K562 (cell line): ENCODE measurements at regions of chr17 and their contacts with region 1.

Region 1: GRCh38 chr17:48215583-48216139 is 108.1 kb downstream of the SNX11 start:
- DNase-seq: peak; percentile 58 to 71 (median 65)
- ATAC-seq: peak; percentile 90
- H3K4me3 ChIP-seq: no peak overlapping the region
- H3K27ac ChIP-seq: no peak overlapping the region
- H3K4me1 ChIP-seq: peaks cover 5 to 21% of the 10 kb centered on the region in 2 experiments
- H3K27me3 ChIP-seq: no peaks in the 10 kb centered on the region
- CTCF ChIP-seq: peak; percentile 76 to 89 (median 82)
- EP300 ChIP-seq: no peak
- POLR2A ChIP-seq: no peak
- RAD21 ChIP-seq: peak; percentile 89 to 94

Region 2: GRCh38 chr17:48153691-48154358 is 61.8 kb before region 1 on chr17:
- CTCF ChIA-PET with region 1: no interaction called
- POLR2A ChIA-PET with region 1: no interaction called
- in situ Hi-C with region 1: no loop called
- intact Hi-C with region 1: loop called (anchors 5 kb)
- DNase-seq: peak; percentile 62 to 70 (median 68)
- ATAC-seq: peak; percentile 79
- H3K4me3 ChIP-seq: no peak overlapping the region
- H3K27ac ChIP-seq: no peak overlapping the region
- H3K4me1 ChIP-seq: peaks cover 4 to 10% of the 10 kb centered on the region in 2 experiments
- H3K27me3 ChIP-seq: peaks cover 4% of the 10 kb centered on the region in 2 experiments; a peak in 2 of 5 replicates
- CTCF ChIP-seq: peak; percentile 58 to 76 (median 68); a peak in 5 of 6 replicates
- EP300 ChIP-seq: no peak
- POLR2A ChIP-seq: no peak
- RAD21 ChIP-seq: peak; percentile 45 to 54

Region 3: DNA sequence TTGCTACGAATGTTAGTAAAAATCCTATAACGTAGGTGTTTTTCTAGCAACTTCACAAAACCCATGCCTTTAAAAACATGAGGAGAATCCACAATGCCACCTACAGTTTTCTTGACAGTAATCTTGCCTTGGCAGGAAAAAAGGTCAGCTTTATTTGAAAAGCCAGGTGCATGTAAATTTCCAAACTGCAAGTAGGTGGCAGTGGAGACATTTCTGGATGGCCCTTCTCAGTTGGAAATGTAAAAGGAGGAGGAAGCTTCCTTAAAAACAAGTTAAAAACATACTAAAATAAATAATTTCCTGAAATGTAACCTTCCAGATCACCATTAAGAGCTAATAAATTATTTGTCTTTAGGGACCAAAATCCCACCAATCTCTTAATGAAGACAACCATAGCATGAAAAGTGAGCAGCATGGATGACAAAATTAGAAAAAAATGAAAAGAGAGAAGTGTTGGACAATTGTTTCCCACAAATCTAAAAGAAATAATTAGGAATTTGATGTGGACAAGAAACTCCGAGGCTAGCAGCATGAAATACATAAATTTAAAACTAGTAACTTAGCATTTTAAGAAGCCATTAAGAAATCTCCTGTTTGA is 44.1 kb after region 1 on chr17:
- CTCF ChIA-PET with region 1: interaction called, 7 read pairs
- POLR2A ChIA-PET with region 1: interaction called, 3 read pairs
- in situ Hi-C with region 1: no loop called
- intact Hi-C with region 1: loop called (anchors 2 kb)
- DNase-seq: peak; percentile 21 to 75 (median 34)
- ATAC-seq: peak; percentile 43; the same call in 2 of the 3 replicates
- H3K4me3 ChIP-seq: no peak overlapping the region
- H3K27ac ChIP-seq: no peak overlapping the region
- H3K4me1 ChIP-seq: peaks cover 0 to 12% of the 10 kb centered on the region in 2 experiments; a peak in 3 of 5 replicates
- H3K27me3 ChIP-seq: no peaks in the 10 kb centered on the region
- CTCF ChIP-seq: peak; percentile 73 to 91 (median 77)
- EP300 ChIP-seq: no peak
- POLR2A ChIP-seq: no peak
- RAD21 ChIP-seq: peak; percentile 68 to 76

Region 4: DNA sequence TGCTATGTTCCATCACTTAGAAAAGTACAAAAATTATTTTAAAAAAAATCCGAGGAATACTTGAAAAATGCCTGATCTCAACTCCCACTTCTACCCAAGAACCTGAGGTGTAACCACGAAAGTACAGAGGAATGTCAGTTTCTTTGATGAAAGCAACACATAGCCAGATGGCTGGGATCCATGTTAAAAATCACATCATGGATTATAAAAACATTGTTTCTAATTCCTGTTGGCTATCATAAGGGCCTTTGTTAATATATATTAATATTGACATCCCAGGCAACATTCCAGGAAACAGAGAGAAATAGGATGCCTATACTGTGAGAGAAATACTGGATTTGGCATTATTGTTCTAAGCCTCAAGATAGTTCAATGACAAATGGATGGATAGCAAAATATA is 99.1 kb after region 1 on chr17:
- CTCF ChIA-PET with region 1: no interaction called
- POLR2A ChIA-PET with region 1: no interaction called
- in situ Hi-C with region 1: loop called (anchors 5 kb)
- intact Hi-C with region 1: no loop called
- DNase-seq: no peak
- ATAC-seq: no peak
- H3K4me3 ChIP-seq: no peak overlapping the region
- H3K27ac ChIP-seq: no peak overlapping the region
- H3K4me1 ChIP-seq: peaks cover 0 to 8% of the 10 kb centered on the region in 2 experiments; a peak in 2 of 5 replicates
- H3K27me3 ChIP-seq: no peaks in the 10 kb centered on the region
- CTCF ChIP-seq: no peak
- EP300 ChIP-seq: no peak
- POLR2A ChIP-seq: no peak
- RAD21 ChIP-seq: no peak

Region 5: GRCh38 chr17:48335858-48336500 is 120.3 kb after region 1 on chr17:
- CTCF ChIA-PET with region 1: interaction called, 5 read pairs
- POLR2A ChIA-PET with region 1: interaction called, 3 read pairs
- in situ Hi-C with region 1: no loop called
- intact Hi-C with region 1: loop called (anchors 2 kb)
- DNase-seq: peak; percentile 14 to 64 (median 29)
- ATAC-seq: peak; percentile 65
- H3K4me3 ChIP-seq: no peak overlapping the region
- H3K27ac ChIP-seq: no peak overlapping the region
- H3K4me1 ChIP-seq: no peaks in the 10 kb centered on the region
- H3K27me3 ChIP-seq: no peaks in the 10 kb centered on the region
- CTCF ChIP-seq: peak; percentile 57 to 87 (median 65); a peak in 4 of 6 replicates
- EP300 ChIP-seq: no peak
- POLR2A ChIP-seq: no peak
- RAD21 ChIP-seq: peak; percentile 82 to 92

Region 6: GRCh38 chr17:48374650-48375230 is 159.1 kb after region 1 on chr17:
- CTCF ChIA-PET with region 1: interaction called, 3 read pairs
- POLR2A ChIA-PET with region 1: no interaction called
- in situ Hi-C with region 1: no loop called
- intact Hi-C with region 1: loop called (anchors 1 kb)
- DNase-seq: peak; percentile 41 to 73 (median 65)
- ATAC-seq: peak; percentile 95
- H3K4me3 ChIP-seq: no peak overlapping the region
- H3K27ac ChIP-seq: no peak overlapping the region
- H3K4me1 ChIP-seq: peaks cover 0 to 12% of the 10 kb centered on the region in 2 experiments; a peak in 3 of 5 replicates
- H3K27me3 ChIP-seq: no peaks in the 10 kb centered on the region
- CTCF ChIP-seq: peak; percentile 83 to 89 (median 88)
- EP300 ChIP-seq: no peak
- POLR2A ChIP-seq: no peak
- RAD21 ChIP-seq: peak; percentile 62 to 90

Region 7: GRCh38 chr17:48483471-48484131 is 267.9 kb after region 1 on chr17:
- CTCF ChIA-PET with region 1: no interaction called
- POLR2A ChIA-PET with region 1: no interaction called
- in situ Hi-C with region 1: no loop called
- intact Hi-C with region 1: loop called (anchors 10 kb)
- DNase-seq: peak in 3 of 4 experiments; percentile 25 to 56 (median 27)
- ATAC-seq: peak; percentile 15; the same call in 2 of the 3 replicates
- H3K4me3 ChIP-seq: no peak overlapping the region
- H3K27ac ChIP-seq: no peak overlapping the region
- H3K4me1 ChIP-seq: peaks cover 5 to 49% of the 10 kb centered on the region in 2 experiments; a peak in 4 of 5 replicates
- H3K27me3 ChIP-seq: no peaks in the 10 kb centered on the region
- CTCF ChIP-seq: no peak
- EP300 ChIP-seq: peak; percentile 20; the same call in 1 of the 2 replicates
- POLR2A ChIP-seq: no peak
- RAD21 ChIP-seq: no peak

Region 8: DNA sequence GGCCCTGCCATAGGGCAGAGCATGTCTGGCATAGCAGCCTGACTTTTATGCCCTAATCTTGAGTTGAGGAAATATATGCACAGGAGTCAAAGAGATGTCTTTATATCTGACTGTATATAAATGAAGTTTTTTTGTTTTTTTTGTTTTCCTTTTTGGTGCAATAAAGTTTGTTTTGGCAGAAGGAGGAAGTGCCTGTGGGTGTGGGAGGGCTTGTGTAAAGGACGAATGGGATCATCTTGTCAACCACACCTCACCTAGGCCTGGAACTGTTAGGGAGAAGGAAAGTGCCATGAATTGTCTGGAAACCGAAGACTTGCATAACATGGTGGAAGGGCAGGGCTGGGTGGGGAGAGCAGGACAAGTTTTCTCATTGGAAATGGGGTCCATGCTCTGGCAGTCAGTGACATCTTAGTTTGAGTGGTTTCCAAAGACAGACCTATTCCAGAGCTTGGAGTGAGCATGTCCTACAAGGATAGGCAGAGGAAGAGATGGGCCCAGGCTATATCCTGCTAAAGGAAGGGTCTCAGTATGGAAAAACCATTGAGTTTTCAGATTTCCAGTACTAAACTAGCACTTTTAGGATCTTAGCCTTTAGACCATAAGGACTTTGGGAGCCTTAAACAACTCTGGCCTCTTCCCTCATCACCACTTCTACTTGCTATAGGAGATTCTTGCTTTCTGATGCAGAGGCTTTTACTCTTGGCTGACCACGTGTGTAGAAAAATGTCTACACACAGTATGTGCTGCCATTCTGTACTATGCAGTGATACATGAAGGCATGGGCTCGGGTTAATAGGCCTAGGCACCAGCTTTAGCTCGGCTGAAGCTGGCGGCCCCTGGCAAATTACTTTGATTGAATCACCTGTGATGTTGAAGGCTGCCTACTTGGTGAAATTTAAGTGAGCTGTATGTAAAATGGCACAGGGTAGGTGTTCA is 713.5 kb after region 1 on chr17:
- CTCF ChIA-PET with region 1: no interaction called
- POLR2A ChIA-PET with region 1: no interaction called
- in situ Hi-C with region 1: no loop called
- intact Hi-C with region 1: no loop called
- DNase-seq: no peak
- ATAC-seq: peak; percentile 39
- H3K4me3 ChIP-seq: no peak overlapping the region
- H3K27ac ChIP-seq: no peak overlapping the region
- H3K4me1 ChIP-seq: no peaks in the 10 kb centered on the region; a peak in 1 of 5 replicates
- H3K27me3 ChIP-seq: no peaks in the 10 kb centered on the region
- CTCF ChIP-seq: no peak
- EP300 ChIP-seq: no peak
- POLR2A ChIP-seq: peak; percentile 63
- RAD21 ChIP-seq: no peak